ENCODE measurements at regions of chr17 and their contacts with region 1.

Region 1: GRCh38 chr17:63478791-63479494 is 2.1 kb downstream of the ACE start:
- DNase-seq: peak in 7 of 10 donors; percentile 17 to 67 (median 55)
- H3K4me3 ChIP-seq: peak overlapping the region in 1 of 59 donors; percentile 2
- H3K27ac ChIP-seq: no peak overlapping the region
- H3K27me3 ChIP-seq: peaks cover 0 to 28% (median 0%) of the 10 kb centered on the region in 45 donors
- CTCF ChIP-seq: peak in 54 of 56 donors; percentile 25 to 72 (median 58)

Region 2: GRCh38 chr17:63434876-63435684 is 43.9 kb before region 1 on chr17:
- intact Hi-C with region 1: loop called in 1 of 2 experiments (anchors 5 kb)
- DNase-seq: peak; percentile 40 to 94 (median 84)
- H3K4me3 ChIP-seq: peak overlapping the region in 20 of 59 donors; percentile 3 to 41 (median 24)
- H3K27ac ChIP-seq: peak overlapping the region in 45 of 59 donors; percentile 2 to 92 (median 51)
- H3K27me3 ChIP-seq: no peaks in the 10 kb centered on the region
- CTCF ChIP-seq: peak in 1 of 56 donors; percentile 19

Region 3: GRCh38 chr17:63455417-63455816 is 23.5 kb before region 1 on chr17:
- intact Hi-C with region 1: no loop called
- DNase-seq: no peak
- H3K4me3 ChIP-seq: no peak overlapping the region
- H3K27ac ChIP-seq: no peak overlapping the region
- H3K27me3 ChIP-seq: no peaks in the 10 kb centered on the region
- CTCF ChIP-seq: no peak